Cardiac septum (tissue), 1 donor: ENCODE measurements at regions of chr9 and their contacts with region 1.

Region 1: DNA sequence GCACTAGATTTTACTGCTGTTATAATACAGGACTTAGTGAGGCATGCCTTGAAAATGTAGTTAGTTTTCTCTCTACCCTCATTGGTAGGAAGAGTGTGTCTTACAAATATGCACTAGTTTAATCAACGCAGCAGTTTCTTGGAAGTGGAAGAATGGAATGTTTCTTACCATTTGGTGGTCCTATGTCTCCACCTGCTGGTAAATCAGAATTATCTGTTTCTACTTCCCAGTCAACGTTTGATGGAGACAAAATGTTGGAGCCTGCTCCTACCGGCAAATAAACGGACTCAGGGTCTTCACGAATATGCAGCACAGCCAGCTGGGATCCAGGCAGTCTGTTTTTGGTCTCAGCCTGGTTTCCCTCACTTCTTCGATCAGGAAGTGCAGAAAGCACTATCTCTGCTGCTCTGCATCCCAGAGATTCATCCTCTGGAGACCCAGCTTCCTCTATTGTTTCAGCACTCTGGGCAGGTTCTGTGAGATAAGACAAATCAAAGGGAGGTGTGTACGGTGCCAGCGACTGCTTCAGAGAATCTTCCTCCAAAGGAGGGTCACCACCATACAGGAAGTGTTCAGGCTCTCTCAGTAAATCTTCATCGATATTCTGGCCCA is 59.5 kb upstream of the PCA3 start:
- DNase-seq: no peak

Region 2: GRCh38 chr9:76403352-76403751 is 301.3 kb before region 1 on chr9:
- intact Hi-C with region 1: loop called (anchors 5 kb)
- DNase-seq: no peak

Region 3: GRCh38 chr9:76445976-76446375 is 258.7 kb before region 1 on chr9:
- intact Hi-C with region 1: loop called (anchors 1 kb)
- DNase-seq: no peak

Region 4: GRCh38 chr9:76667521-76667957 is 37.2 kb before region 1 on chr9:
- intact Hi-C with region 1: loop called (anchors 5 kb)
- DNase-seq: no peak